Activated CD4-positive, alpha-beta memory T cell treated with anti-CD3 and anti-CD28 coated beads for 36 hours (primary cell): ENCODE measurements at regions of chr18 and their contacts with region 1.

Region 1: GRCh38 chr18:2714140-2714539 is 58.6 kb downstream of the SMCHD1 start:
- DNase-seq: no peak
- H3K4me3 Mint-ChIP-seq: no peak overlapping the region
- H3K27ac Mint-ChIP-seq: peak overlapping the region; percentile 66
- H3K4me1 Mint-ChIP-seq: peaks cover 35% of the 10 kb centered on the region
- H3K27me3 Mint-ChIP-seq: no peaks in the 10 kb centered on the region

Region 2: GRCh38 chr18:2654105-2654927 is 59.8 kb before region 1 on chr18:
- CTCF ChIA-PET with region 1: no interaction called
- POLR2A ChIA-PET with region 1: no interaction called
- intact Hi-C with region 1: no loop called
- DNase-seq: no peak
- H3K4me3 Mint-ChIP-seq: peak overlapping the region; percentile 85
- H3K27ac Mint-ChIP-seq: peak overlapping the region; percentile 93
- H3K4me1 Mint-ChIP-seq: peaks cover 25% of the 10 kb centered on the region
- H3K27me3 Mint-ChIP-seq: no peaks in the 10 kb centered on the region

Region 3: DNA sequence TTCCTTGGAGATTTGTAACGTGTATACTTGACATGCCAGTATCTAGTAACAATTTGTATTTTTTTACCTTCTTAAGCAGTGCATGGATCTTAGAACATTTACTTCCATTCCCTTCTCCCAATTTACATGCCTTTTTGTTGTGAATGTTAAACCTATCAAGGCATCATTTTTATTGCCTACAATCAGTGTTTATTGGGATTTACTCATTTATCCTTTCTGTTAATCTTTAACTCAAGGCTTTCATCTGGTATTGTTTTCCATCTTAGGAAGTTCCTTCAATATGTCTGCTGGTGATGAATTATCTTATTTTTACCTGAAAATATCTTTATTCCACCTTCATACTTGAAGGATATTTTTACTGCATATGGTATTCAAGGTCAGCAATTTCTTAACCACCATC is 44.2 kb after region 1 on chr18:
- CTCF ChIA-PET with region 1: no interaction called
- POLR2A ChIA-PET with region 1: no interaction called
- intact Hi-C with region 1: loop called (anchors 5 kb)
- DNase-seq: no peak
- H3K4me3 Mint-ChIP-seq: no peak overlapping the region
- H3K27ac Mint-ChIP-seq: peak overlapping the region; percentile 31
- H3K4me1 Mint-ChIP-seq: peaks cover 15% of the 10 kb centered on the region
- H3K27me3 Mint-ChIP-seq: no peaks in the 10 kb centered on the region